ENCODE measurements at regions of chr11 and their contacts with region 1.

Region 1: DNA sequence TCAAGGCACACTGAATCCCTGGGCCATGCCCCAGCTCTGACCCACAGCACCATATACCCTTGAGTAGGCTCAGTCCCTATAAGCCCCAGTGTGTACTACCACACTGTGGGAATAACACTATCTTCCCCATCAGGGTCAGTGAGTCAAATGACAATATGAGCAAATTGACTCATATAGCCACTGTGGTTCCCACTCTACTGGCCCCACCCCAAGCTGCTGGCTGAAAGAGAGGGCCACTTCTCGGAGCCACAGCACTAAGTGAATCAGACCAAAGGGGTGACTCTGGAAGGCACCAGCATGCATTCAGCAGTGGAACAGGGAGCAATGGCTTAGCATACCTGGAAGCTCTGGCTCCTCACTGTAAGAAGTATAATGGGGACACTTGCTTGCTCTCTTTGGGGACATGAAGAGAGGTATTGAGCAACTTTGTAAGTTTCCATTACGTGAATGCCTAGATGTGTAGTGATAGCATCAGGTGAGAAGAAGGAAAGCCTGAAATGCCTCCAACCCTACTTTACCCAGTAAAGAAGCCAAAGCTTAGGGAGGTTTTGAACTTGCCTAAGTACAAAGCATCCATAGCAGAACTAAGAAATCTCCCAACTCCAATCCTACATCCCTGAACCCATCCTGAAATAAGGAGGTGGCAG is 13.5 kb downstream of the CD59 start:
- DNase-seq: peak; percentile 41
- H3K4me3 Mint-ChIP-seq: peak overlapping the region; percentile 61
- H3K27ac Mint-ChIP-seq: peak overlapping the region; percentile 68
- H3K4me1 Mint-ChIP-seq: peaks cover 77% of the 10 kb centered on the region
- H3K27me3 Mint-ChIP-seq: peaks cover 1% of the 10 kb centered on the region

Region 2: GRCh38 chr11:33065445-33066178 is 657.1 kb before region 1 on chr11:
- intact Hi-C with region 1: loop called (anchors 5 kb)
- DNase-seq: peak; percentile 47
- H3K4me3 Mint-ChIP-seq: no peak overlapping the region
- H3K27ac Mint-ChIP-seq: no peak overlapping the region
- H3K4me1 Mint-ChIP-seq: peaks cover 49% of the 10 kb centered on the region
- H3K27me3 Mint-ChIP-seq: no peaks in the 10 kb centered on the region

Region 3: DNA sequence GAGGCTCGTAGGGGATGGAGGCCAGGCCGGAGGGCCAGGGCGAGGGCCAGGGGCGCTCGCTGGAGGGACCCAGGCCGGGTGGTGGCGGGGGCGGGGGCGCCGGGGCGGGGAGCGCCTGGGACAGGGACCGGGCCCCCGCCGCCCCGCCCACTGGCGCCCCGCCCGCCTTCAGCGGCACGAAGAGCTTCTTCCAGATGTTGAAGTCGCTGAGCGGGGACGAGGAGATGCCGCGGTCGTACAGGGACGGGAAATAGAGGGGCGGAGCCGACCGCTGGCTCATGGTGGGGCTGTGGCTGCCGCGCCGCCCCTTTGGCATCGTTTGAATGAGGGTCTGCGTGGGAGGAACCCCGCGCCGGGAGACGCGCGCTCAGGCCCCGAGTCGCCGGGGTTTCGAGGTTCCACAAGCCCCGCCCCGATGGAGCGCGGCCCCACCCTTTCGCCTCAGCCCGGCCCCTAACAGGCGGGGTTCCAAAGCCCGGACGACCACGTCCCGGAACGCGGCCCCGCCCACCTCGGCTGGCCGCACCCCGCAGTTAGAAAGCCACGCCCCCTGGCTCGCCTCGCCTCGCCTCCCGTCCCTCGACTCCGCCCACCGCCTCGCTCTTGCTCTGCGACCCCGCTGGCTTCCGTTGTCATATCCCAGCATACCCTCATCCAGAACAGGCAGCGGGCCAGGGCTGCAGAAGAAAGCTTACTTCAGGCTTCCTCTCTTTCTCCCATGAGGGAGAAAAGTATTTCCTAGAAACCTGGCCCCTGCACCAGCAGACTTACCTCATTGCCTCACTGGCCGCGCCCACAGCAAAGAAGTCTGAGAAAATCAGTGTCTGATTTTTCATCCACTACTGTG is 22.1 kb before region 1 on chr11 and contains the start of gene C11orf91:
- intact Hi-C with region 1: loop called (anchors 1 kb)
- DNase-seq: peak; percentile 94
- H3K4me3 Mint-ChIP-seq: peak within 1 kb of the TSS; percentile 84
- H3K27ac Mint-ChIP-seq: peak within 1 kb of the TSS; percentile 78
- H3K4me1 Mint-ChIP-seq: peaks cover 29% of the 10 kb centered on the region
- H3K27me3 Mint-ChIP-seq: peaks cover 22% of the 10 kb centered on the region
- total RNA-seq, gene C11orf91: 0.23 TPM in 1 of 2 replicates, not detected in the other

Region 4: DNA sequence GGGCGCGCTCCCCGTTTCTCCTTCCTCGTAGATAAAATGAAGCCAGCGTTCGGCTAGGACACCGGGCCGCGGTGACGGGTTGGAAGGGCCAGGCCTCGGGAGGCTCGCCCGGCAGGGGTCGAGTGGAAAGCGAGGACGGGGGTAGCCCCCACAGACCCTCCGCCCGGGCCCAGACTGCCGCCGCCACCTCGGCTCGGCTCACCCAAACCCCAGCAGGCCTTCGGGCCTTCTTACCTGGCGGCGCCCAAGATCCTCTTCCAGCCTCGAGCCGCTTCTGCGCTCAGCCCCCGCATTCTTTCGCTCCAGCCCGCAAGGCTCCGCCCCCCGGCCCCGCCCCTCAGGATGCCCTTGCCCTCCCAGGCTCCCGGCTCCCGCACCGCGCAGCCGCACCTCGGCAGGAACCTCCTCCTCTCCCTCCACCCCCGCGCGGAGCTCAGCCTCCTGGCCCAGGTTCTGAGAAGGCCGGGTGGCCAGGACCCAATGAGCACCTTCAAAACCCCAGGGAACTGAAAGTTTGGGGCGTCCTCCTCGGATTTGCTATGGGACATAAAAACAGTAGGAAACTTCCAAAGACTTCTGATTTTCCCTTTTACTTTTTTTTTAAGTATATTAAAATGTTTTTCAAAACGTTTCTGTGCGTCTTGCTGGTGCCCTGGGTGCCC is 13.6 kb after region 1 on chr11 and contains the start of gene CD59:
- intact Hi-C with region 1: loop called (anchors 1 kb)
- DNase-seq: peak; percentile 83
- H3K4me3 Mint-ChIP-seq: peak within 1 kb of the TSS; percentile 87
- H3K27ac Mint-ChIP-seq: peak within 1 kb of the TSS; percentile 89
- H3K4me1 Mint-ChIP-seq: peaks cover 37% of the 10 kb centered on the region
- H3K27me3 Mint-ChIP-seq: peaks cover 3% of the 10 kb centered on the region
- total RNA-seq, gene CD59: 140 and 143 TPM in 2 replicates

Region 5: DNA sequence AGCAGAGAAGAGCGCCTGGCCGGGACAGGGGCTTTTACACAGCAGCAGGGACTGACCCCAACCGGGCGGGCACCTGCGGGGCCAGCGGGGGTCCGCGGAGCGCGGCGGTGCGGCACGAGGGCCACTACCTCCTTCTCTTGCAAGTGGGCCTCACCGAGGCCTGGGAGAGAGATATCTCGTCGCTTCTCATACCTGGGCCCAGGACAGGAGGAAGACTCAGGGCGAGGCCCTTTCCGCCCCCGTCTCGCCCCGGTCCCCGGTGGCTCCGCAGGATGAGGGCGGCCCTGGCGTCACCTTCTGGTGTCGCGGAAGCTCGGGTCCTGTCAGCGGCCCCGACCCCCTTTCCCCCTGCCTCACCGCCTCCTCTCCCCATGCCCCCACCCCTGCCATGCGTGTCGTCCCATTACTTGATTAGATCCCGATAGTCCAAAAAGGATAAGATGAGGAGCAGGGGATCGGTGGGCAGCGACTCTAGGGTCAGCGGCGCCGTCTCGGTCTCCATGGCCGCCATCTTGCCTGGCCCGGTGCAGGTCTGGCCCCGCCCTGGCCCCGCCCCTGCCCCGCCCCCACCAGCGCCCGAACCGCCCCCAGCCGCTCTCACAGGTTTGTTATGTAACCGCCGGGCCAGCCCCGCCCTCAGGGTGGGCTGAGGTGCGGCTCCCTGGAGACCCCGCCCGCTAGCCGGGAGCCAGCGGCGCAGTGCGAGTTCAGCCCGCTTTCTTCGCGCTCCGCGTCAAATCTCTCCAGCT is 51.5 kb after region 1 on chr11 and contains the start of gene FBXO3:
- intact Hi-C with region 1: loop called (anchors 5 kb)
- DNase-seq: peak; percentile 80
- H3K4me3 Mint-ChIP-seq: peak within 1 kb of the TSS; percentile 94
- H3K27ac Mint-ChIP-seq: peak within 1 kb of the TSS; percentile 91
- H3K4me1 Mint-ChIP-seq: peaks cover 37% of the 10 kb centered on the region
- H3K27me3 Mint-ChIP-seq: peaks cover 29% of the 10 kb centered on the region
- total RNA-seq, gene FBXO3: 18.6 and 24.3 TPM in 2 replicates

Region 6: GRCh38 chr11:33893711-33894397 is 171.2 kb after region 1 on chr11:
- intact Hi-C with region 1: loop called (anchors 5 kb)
- DNase-seq: peak; percentile 38
- H3K4me3 Mint-ChIP-seq: no peak overlapping the region
- H3K27ac Mint-ChIP-seq: peak overlapping the region; percentile 16
- H3K4me1 Mint-ChIP-seq: peaks cover 22% of the 10 kb centered on the region
- H3K27me3 Mint-ChIP-seq: peaks cover 64% of the 10 kb centered on the region

Region 7: DNA sequence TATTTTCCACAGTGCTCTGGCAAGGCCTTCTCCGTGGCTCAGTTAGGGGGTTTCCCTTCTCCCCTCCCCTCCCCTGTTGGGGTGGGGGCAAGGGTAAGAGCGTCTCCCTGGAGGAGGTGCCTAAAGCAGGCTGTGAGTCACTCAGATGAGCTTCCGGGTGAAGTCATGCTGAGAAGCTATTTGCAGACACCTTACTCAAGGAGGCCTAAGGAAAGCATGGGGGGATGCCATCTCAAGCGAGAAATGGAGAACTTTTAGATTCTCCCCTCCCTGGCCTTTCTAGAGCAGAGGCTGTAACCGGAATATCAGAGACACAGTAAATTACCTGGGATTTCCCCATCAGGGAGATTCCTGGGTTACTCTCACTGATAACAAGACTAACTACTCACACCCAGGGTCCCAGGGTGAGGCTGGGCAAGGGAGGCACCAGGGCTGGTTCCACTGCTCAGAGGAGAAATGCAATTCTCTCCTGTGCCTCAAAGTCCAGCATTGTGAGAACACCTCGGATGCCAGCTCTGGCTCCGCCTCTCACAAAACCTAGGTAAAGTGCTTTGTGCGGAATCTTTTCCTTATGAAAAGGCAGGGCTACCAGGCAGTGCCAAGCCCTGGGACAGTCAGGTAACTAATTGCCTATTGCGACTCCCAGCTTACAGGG is 511.5 kb after region 1 on chr11:
- intact Hi-C with region 1: loop called (anchors 5 kb)
- DNase-seq: peak; percentile 80
- H3K4me3 Mint-ChIP-seq: peak overlapping the region; percentile 50
- H3K27ac Mint-ChIP-seq: peak overlapping the region; percentile 85
- H3K4me1 Mint-ChIP-seq: peaks cover 61% of the 10 kb centered on the region
- H3K27me3 Mint-ChIP-seq: peaks cover 12% of the 10 kb centered on the region